Activated naive CD4-positive, alpha-beta T cell treated with anti-CD3 and anti-CD28 coated beads for 36 hours (primary cell): ENCODE measurements at regions of chr6 and their contacts with region 1.

Region 1: DNA sequence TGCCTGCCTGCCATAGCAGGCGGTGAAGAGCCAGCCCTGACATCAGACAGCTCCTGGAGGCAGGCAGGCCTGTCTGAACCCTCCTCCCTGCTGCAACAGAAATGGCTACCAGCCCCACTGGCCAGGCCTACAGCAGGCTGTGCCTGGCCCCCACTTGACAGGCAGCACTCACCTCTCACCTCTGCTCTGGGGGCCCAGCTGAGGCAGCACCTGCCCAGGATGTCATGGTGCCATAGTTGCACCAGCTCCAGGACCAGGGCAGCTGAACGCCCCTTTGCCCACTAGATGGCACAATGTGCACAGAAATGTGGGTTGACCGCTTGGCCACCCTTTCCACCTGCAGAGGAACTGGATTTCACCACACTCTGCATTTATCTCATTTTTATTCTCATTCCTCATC is 30.6 kb downstream of the MRPL14 start:
- DNase-seq: peak; percentile 89
- H3K4me3 Mint-ChIP-seq: no peak overlapping the region
- H3K27ac Mint-ChIP-seq: no peak overlapping the region
- H3K4me1 Mint-ChIP-seq: no peaks in the 10 kb centered on the region
- H3K27me3 Mint-ChIP-seq: no peaks in the 10 kb centered on the region

Region 2: DNA sequence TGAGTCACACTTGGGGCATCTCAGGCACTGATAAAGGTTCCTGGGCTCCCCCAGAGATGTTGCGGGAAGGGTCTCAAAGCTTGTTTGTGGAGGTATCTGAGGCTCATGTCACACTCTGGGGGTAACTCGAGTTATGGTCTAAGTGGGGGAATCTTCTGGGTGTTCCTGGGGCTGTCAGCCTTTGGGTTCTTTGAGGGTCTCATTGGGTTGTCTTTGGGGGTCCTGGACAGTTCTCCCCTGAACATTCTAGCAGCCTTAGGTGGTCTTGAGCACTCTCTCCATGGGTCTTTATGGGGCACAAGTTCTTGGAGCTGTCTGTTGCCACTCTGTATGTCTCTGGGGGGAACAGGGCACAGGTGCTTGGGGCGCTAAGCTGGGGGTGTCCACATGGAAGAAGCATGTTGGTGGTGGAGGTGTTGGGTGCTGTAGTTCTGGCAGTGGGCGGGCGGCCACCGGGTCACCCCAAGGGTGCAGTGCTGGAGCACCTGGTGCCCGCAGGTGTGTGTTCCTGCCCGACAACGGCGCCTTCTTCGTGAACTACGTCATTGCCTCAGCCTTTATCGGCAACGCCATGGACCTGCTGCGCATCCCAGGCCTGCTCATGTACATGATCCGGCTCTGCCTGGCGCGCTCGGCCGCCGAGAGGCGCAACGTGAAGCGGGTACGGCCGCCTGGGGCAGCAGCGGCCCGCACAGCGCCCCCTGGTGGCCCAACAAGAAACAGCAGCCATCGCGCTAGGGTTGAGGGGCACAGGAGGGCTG is 54.9 kb after region 1 on chr6:
- CTCF ChIA-PET with region 1: interaction called, 38 read pairs
- intact Hi-C with region 1: loop called (anchors 1 kb)
- DNase-seq: peak; percentile 81
- H3K4me3 Mint-ChIP-seq: no peak overlapping the region
- H3K27ac Mint-ChIP-seq: no peak overlapping the region
- H3K4me1 Mint-ChIP-seq: no peaks in the 10 kb centered on the region
- H3K27me3 Mint-ChIP-seq: no peaks in the 10 kb centered on the region

Region 3: DNA sequence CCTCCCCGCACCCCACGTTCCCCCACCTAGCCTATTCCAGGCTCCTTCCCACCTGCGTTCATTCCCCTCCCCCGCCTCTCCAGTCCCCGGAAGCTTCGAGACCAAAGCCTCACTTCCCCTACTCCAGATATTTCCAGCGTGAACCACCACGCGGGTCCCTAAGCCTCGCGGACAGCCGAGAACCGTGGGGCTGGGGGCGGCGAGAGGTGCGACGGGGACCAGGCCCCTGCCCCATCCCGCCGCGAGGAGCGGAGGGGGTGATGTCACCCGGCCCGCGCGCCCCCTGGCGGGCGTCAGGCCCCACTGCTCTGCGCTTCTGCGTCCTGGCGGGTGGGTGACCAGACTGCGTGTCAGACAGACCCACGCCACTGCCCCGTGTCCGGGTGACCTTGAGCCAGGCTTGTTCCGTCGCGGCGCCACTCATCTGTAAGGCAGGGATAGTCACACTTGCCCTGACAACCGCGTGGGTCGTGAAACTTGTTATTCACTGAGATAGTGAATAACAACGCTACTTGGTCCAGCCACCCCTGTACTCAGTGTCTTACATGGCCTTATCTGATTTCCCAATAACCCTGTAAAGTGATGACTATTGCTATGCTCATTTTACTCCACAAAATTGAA is 141.3 kb after region 1 on chr6:
- CTCF ChIA-PET with region 1: interaction called, 6 read pairs
- intact Hi-C with region 1: loop called (anchors 5 kb)
- DNase-seq: peak; percentile 77
- H3K4me3 Mint-ChIP-seq: peak overlapping the region; percentile 78
- H3K27ac Mint-ChIP-seq: peak overlapping the region; percentile 87
- H3K4me1 Mint-ChIP-seq: peaks cover 14% of the 10 kb centered on the region
- H3K27me3 Mint-ChIP-seq: no peaks in the 10 kb centered on the region